B cell (primary cell): ENCODE measurements at regions of chr6 and their contacts with region 1.

Region 1: GRCh38 chr6:38018755-38019165 is 199.2 kb downstream of the ZFAND3 start:
- DNase-seq: no peak
- ATAC-seq: no peak
- H3K4me3 ChIP-seq: no peak overlapping the region
- H3K4me3 Mint-ChIP-seq: no peak overlapping the region
- H3K27ac ChIP-seq: no peak overlapping the region
- H3K27ac Mint-ChIP-seq: no peak overlapping the region
- H3K4me1 ChIP-seq: peaks cover 4 to 10% of the 10 kb centered on the region in 2 donors
- H3K4me1 Mint-ChIP-seq: peaks cover 51% of the 10 kb centered on the region
- H3K27me3 ChIP-seq: no peaks in the 10 kb centered on the region
- H3K27me3 Mint-ChIP-seq: no peaks in the 10 kb centered on the region
- CTCF ChIP-seq: no peak

Region 2: DNA sequence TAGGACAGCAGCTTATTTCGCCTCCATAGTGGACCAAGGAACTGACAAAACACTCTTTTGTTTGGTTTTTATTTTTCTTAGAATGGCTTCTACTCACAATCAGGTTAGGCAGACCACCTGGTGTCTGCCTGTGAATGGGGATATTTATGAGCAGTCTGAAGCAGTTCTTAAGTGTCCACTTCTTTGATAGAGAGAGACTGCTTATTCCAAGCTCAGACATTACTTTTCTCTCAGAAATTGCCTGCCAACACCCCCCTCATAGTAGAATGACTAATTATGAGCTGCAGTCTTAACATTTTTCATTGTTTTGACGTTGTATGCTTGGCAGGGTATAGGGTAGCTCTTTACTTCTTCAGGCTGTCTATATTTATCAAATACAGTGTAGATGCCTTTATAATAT is 24.5 kb before region 1 on chr6:
- CTCF ChIA-PET with region 1: interaction called, 4 read pairs
- POLR2A ChIA-PET with region 1: no interaction called
- intact Hi-C with region 1: loop called (anchors 1 kb)
- DNase-seq: no peak
- ATAC-seq: no peak
- H3K4me3 ChIP-seq: no peak overlapping the region
- H3K4me3 Mint-ChIP-seq: no peak overlapping the region
- H3K27ac ChIP-seq: no peak overlapping the region
- H3K27ac Mint-ChIP-seq: no peak overlapping the region
- H3K4me1 ChIP-seq: no peaks in the 10 kb centered on the region
- H3K4me1 Mint-ChIP-seq: peaks cover 41% of the 10 kb centered on the region
- H3K27me3 ChIP-seq: no peaks in the 10 kb centered on the region
- H3K27me3 Mint-ChIP-seq: no peaks in the 10 kb centered on the region
- CTCF ChIP-seq: no peak

Region 3: GRCh38 chr6:38034274-38034914 is 15.6 kb after region 1 on chr6:
- CTCF ChIA-PET with region 1: interaction called, 23 read pairs
- POLR2A ChIA-PET with region 1: no interaction called
- intact Hi-C with region 1: loop called (anchors 2 kb)
- DNase-seq: peak; percentile 26
- ATAC-seq: no peak
- H3K4me3 ChIP-seq: no peak overlapping the region
- H3K4me3 Mint-ChIP-seq: no peak overlapping the region
- H3K27ac ChIP-seq: no peak overlapping the region
- H3K27ac Mint-ChIP-seq: no peak overlapping the region
- H3K4me1 ChIP-seq: peaks cover 0 to 16% of the 10 kb centered on the region in 2 donors
- H3K4me1 Mint-ChIP-seq: peaks cover 56% of the 10 kb centered on the region
- H3K27me3 ChIP-seq: no peaks in the 10 kb centered on the region
- H3K27me3 Mint-ChIP-seq: no peaks in the 10 kb centered on the region
- CTCF ChIP-seq: peak; percentile 40